GM10248 (cell line): ENCODE measurements at regions of chr7 and their contacts with region 1.

Region 1: DNA sequence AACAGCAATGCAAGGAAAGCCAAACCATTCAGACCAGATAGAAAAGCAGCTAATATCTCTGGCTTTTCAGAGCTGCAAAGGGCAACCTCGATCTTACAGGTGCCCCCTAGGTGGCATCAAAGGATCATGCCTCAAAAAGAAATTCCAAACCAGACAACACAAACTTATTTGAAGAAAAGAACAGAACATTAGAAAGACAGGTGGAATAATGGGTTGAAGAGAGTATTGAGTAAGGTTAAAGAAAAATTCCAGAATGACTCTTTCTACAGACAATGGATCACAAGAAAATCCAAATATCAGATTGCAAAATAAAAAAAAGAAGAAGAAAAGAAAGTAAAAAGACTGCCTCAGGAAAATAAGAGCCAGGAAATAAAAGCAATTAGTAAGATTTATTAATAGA is 213.7 kb downstream of the ELMO1 start:
- DNase-seq: no peak
- CTCF ChIP-seq: peak; percentile 36

Region 2: GRCh38 chr7:37224746-37225145 is 10.2 kb before region 1 on chr7:
- CTCF ChIA-PET with region 1: interaction called, 15 read pairs
- POLR2A ChIA-PET with region 1: no interaction called
- DNase-seq: no peak
- CTCF ChIP-seq: no peak

Region 3: GRCh38 chr7:37247861-37248260 is 12.9 kb after region 1 on chr7:
- CTCF ChIA-PET with region 1: interaction called, 35 read pairs
- POLR2A ChIA-PET with region 1: no interaction called
- DNase-seq: no peak
- CTCF ChIP-seq: no peak